ENCODE measurements at regions of chr17 and their contacts with region 1.

Region 1: DNA sequence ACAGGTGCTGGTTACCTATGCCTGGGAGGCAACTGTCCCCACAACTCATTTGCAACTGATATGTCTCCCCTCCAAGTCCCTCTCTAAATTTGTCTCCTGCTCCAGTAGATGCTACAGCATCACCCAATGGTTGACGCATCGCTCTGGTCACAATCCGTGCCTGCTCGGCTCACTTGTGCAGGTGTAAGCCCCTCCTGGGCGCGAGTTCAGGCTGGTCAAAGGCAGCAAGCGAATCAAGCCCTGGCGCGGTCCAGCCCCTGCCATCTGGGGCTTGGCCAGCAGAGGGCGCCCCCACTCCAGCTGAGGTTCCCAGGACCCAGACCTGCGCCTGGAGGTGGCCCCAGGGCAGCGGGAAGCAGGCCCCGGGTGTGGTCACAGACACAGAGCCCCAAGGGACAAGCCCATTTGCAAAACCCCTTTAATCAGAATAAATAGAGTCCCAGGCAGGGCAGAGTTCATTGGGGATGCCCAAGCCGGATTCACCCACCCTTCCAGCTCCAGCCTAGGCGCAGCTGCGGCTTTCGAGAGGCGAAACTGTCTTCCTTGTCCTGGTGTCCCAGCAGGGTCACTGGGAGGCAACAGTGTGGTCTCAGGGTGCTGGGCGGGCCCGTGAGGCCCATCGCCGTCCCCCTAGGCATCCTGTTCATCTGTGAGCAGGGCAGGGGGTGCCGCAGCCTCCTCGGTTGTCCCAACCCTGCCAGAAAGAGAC is 15.9 kb downstream of the TMC6 start:
- DNase-seq: peak; percentile 91
- ATAC-seq: peak; percentile 68

Region 2: GRCh38 chr17:77892469-77893143 is 220.1 kb before region 1 on chr17:
- intact Hi-C with region 1: no loop called
- DNase-seq: no peak
- ATAC-seq: no peak

Region 3: GRCh38 chr17:78174346-78174869 is 61.7 kb after region 1 on chr17:
- intact Hi-C with region 1: loop called (anchors 2 kb)
- DNase-seq: peak; percentile 91
- ATAC-seq: peak; percentile 74

Region 4: DNA sequence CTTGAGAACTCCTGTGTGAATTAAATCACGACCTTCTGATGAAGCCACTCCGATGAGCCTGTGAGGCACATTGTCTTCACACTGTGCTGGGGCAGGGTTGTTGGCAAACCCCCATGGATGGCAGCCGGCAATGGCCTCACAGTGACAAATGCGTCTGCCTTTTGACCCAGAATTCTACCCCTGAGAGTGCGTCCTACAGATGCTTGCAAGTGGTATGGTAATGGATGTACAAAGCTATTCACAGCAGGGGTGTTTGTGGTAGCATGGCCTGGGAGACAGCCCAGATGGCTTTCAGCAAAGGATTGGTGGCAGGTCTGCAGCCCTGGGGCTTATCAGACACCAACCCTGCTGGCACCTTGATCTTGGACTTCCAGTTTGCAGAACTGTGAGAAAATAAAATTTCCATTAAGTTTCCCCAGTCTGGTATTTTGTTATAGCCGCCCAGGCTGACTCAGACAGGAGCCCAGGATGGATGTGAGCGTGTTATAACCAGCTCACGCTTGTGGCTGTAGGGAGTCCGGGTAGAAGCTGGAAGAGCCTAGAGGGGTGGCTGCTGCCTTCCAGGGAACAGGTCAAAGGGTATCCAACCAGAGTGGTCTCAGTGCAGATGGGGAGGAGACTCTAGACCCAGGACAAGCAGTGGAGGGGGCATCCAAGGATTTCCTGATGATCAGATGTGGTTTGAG is 84.6 kb after region 1 on chr17:
- intact Hi-C with region 1: no loop called
- DNase-seq: peak; percentile 50
- ATAC-seq: peak; percentile 73

Region 5: DNA sequence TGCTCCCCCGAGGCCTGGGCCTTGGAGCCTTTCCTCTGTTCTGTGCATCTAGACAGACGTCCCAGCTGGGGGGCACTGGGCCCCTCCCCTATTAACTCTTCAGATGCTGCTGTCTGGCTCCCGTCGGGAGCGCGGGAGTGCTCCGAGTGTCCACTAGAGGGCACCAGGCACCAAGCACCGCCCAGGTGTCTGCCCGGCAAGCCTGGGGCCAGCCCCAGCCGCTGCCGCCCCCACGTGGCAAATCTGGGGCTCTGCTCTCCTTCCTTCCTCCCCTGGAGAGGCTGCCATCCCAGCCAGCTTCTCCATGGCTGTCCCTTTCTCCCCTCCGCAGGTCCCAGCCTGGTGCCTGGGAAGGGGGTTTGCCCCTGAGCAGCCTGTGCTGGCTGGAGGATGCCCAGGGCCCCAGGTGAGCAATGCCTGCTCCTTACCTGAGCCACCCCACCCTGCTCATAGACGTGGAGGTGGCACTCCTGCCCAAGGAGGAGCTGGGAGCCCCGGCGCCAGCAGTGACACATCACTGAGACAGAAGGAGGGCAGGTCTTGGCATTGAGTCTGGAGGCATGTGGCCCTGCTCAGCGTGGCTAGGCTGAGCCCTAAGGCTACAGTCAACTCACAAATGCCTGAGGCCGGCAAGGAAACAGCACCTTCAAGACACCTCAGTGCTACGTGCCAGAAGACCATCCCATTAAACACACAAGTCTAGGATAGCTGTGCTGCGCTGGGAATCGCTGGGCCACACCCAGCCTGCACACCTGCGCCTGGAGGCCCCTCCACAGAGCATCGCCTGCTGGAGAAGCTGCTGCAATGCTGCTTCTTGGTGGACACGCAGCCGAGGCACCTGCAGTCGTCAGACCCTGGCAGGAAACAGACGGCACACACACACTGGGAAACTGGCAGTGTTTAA is 138.5 kb after region 1 on chr17:
- intact Hi-C with region 1: loop called (anchors 5 kb)
- DNase-seq: peak; percentile 90
- ATAC-seq: peak; percentile 79

Measured in Right ventricle myocardium superior (tissue), 1 donor.